HCT116 (cell line): ENCODE measurements at regions of chr6 and their contacts with region 1.

Region 1: GRCh38 chr6:38773338-38773737 is 58.2 kb downstream of the DNAH8 start:
- DNase-seq: peak; percentile 47
- ATAC-seq: peak; percentile 94
- H3K4me3 ChIP-seq: no peak overlapping the region
- H3K27ac ChIP-seq: no peak overlapping the region
- H3K4me1 ChIP-seq: no peaks in the 10 kb centered on the region
- H3K27me3 ChIP-seq: no peaks in the 10 kb centered on the region
- CTCF ChIP-seq: peak; percentile 50 to 89 (median 82); a peak in 5 of 6 replicates
- POLR2A ChIP-seq: no peak
- RAD21 ChIP-seq: peak; percentile 67

Region 2: GRCh38 chr6:38784506-38785235 is 11.3 kb after region 1 on chr6:
- CTCF ChIA-PET with region 1: interaction called, 14 read pairs
- POLR2A ChIA-PET with region 1: no interaction called
- RAD21 ChIA-PET with region 1: no interaction called
- intact Hi-C with region 1: no loop called
- DNase-seq: no peak
- ATAC-seq: no peak
- H3K4me3 ChIP-seq: no peak overlapping the region
- H3K27ac ChIP-seq: no peak overlapping the region
- H3K4me1 ChIP-seq: no peaks in the 10 kb centered on the region
- H3K27me3 ChIP-seq: peaks cover 9% of the 10 kb centered on the region; the same call in 1 of the 2 replicates
- CTCF ChIP-seq: no peak
- POLR2A ChIP-seq: no peak
- RAD21 ChIP-seq: no peak